A673 (cell line): ENCODE measurements at regions of chr9 and their contacts with region 1.

Region 1: DNA sequence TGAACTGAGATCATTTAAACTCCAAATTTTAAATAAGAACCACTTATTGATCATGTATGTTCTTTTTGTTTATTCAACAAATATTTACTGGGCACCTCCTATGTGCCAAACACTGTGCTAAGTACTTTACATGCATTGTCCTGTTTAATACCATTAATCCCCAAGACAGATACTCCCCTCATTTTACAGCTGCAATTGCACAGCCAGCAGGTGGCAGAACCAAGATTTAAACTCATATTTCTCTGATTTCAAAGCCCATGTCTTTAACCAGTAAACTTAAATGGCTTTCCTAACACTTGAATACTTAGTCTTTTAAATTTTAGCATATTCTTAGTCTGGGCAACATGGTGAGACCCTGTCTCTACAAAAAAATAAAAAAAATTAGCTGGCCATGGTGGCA is 43.4 kb upstream of the KIAA1958 start:
- DNase-seq: peak; percentile 44
- H3K4me3 ChIP-seq: no peak overlapping the region
- H3K27ac ChIP-seq: no peak overlapping the region
- H3K4me1 ChIP-seq: no peaks in the 10 kb centered on the region
- H3K27me3 ChIP-seq: no peaks in the 10 kb centered on the region
- CTCF ChIP-seq: peak; percentile 73

Region 2: GRCh38 chr9:112665347-112665746 is 222.1 kb after region 1 on chr9:
- CTCF ChIA-PET with region 1: no interaction called
- POLR2A ChIA-PET with region 1: no interaction called
- intact Hi-C with region 1: loop called (anchors 2 kb)
- DNase-seq: peak; percentile 45
- H3K4me3 ChIP-seq: no peak overlapping the region
- H3K27ac ChIP-seq: no peak overlapping the region
- H3K4me1 ChIP-seq: no peaks in the 10 kb centered on the region
- H3K27me3 ChIP-seq: no peaks in the 10 kb centered on the region
- CTCF ChIP-seq: peak; percentile 58

Region 3: GRCh38 chr9:112705768-112706427 is 262.7 kb after region 1 on chr9:
- CTCF ChIA-PET with region 1: interaction called, 4 read pairs
- POLR2A ChIA-PET with region 1: no interaction called
- intact Hi-C with region 1: loop called (anchors 2 kb)
- DNase-seq: peak; percentile 83
- H3K4me3 ChIP-seq: no peak overlapping the region
- H3K27ac ChIP-seq: no peak overlapping the region
- H3K4me1 ChIP-seq: peaks cover 3% of the 10 kb centered on the region
- H3K27me3 ChIP-seq: no peaks in the 10 kb centered on the region
- CTCF ChIP-seq: peak; percentile 68